Heart left ventricle (tissue), 16 donors: ENCODE measurements at regions of chr14 and their contacts with region 1.

Region 1: GRCh38 chr14:37142835-37143401 is 29.5 kb downstream of the SLC25A21 start:
- DNase-seq: no peak
- ATAC-seq: no peak
- H3K4me3 ChIP-seq: no peak overlapping the region
- H3K27ac ChIP-seq: no peak overlapping the region
- H3K4me1 ChIP-seq: no peaks in the 10 kb centered on the region
- H3K27me3 ChIP-seq: no peaks in the 10 kb centered on the region
- CTCF ChIP-seq: no peak
- POLR2A ChIP-seq: no peak

Region 2: GRCh38 chr14:36647824-36648753 is 494.8 kb before region 1 on chr14:
- intact Hi-C with region 1: loop called in 2 of 10 experiments (anchors 10 kb)
- DNase-seq: peak in 1 of 5 donors; percentile 25
- ATAC-seq: peak in 3 of 4 donors; percentile 68 to 87 (median 78)
- H3K4me3 ChIP-seq: peak overlapping the region in 11 of 12 donors; percentile 2 to 42 (median 32)
- H3K27ac ChIP-seq: no peak overlapping the region
- H3K4me1 ChIP-seq: peaks cover 0 to 19% (median 13%) of the 10 kb centered on the region in 12 donors
- H3K27me3 ChIP-seq: peaks cover 43 to 97% (median 80%) of the 10 kb centered on the region in 9 donors
- CTCF ChIP-seq: peak in 10 of 12 donors; percentile 10 to 53 (median 38)
- POLR2A ChIP-seq: no peak

Region 3: DNA sequence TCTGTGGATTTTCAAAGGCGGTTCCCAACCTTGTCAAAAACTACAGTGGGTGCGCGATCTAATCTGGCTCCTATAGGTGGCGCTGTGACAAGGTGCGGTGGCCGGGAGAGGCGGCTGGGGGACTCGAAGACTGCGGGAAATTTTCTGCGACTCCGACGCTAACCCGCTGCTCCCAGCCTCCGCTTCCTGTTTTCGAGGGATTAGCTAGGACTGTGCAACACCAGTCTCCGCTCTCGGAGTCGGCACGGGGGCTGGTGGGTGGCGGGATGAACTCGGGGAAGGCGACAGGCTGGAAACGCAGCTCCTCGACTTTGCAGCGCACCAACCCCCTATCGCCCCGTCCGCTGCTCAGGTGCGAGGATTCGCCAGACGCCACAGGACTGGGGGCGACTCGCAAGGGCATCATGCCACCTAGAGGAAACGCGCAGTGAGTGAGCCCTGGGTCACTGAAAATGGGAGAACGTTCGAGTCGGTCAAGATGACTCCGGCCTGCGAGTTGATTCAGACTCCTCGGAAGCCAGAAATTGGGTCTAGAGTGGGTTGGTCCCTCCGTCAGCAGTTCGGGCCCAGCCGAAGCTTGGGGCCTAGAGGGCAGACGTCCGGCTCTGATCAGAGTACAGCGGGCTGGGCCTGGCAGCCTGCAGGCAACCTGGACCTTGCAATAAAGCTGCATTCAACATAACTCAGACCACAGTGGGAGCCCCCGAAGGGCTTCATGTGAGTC is 486.8 kb before region 1 on chr14:
- intact Hi-C with region 1: loop called in 1 of 10 experiments (anchors 10 kb)
- DNase-seq: no peak
- ATAC-seq: peak in 1 of 4 donors; percentile 20
- H3K4me3 ChIP-seq: no peak overlapping the region
- H3K27ac ChIP-seq: no peak overlapping the region
- H3K4me1 ChIP-seq: peaks cover 0 to 42% (median 20%) of the 10 kb centered on the region in 12 donors
- H3K27me3 ChIP-seq: peaks cover 83 to 100% (median 100%) of the 10 kb centered on the region in 9 donors
- CTCF ChIP-seq: peak in 9 of 12 donors; percentile 26 to 47 (median 33)
- POLR2A ChIP-seq: no peak

Region 4: GRCh38 chr14:36941783-36942521 is 201.0 kb before region 1 on chr14:
- intact Hi-C with region 1: loop called in 1 of 10 experiments (anchors 10 kb)
- DNase-seq: peak; percentile 34 to 78 (median 46)
- ATAC-seq: peak in 3 of 4 donors; percentile 37 to 81 (median 73)
- H3K4me3 ChIP-seq: no peak overlapping the region
- H3K27ac ChIP-seq: no peak overlapping the region
- H3K4me1 ChIP-seq: no peaks in the 10 kb centered on the region
- H3K27me3 ChIP-seq: peaks cover 0 to 13% (median 0%) of the 10 kb centered on the region in 9 donors
- CTCF ChIP-seq: peak; percentile 87 to 97 (median 94)
- POLR2A ChIP-seq: no peak

Region 5: GRCh38 chr14:37116933-37117849 is 25.7 kb before region 1 on chr14:
- intact Hi-C with region 1: no loop called
- DNase-seq: no peak
- ATAC-seq: no peak
- H3K4me3 ChIP-seq: no peak overlapping the region
- H3K27ac ChIP-seq: no peak overlapping the region
- H3K4me1 ChIP-seq: no peaks in the 10 kb centered on the region
- H3K27me3 ChIP-seq: peaks cover 0 to 3% (median 0%) of the 10 kb centered on the region in 9 donors
- CTCF ChIP-seq: peak in 2 of 12 donors; percentile 6 to 10
- POLR2A ChIP-seq: no peak

Region 6: DNA sequence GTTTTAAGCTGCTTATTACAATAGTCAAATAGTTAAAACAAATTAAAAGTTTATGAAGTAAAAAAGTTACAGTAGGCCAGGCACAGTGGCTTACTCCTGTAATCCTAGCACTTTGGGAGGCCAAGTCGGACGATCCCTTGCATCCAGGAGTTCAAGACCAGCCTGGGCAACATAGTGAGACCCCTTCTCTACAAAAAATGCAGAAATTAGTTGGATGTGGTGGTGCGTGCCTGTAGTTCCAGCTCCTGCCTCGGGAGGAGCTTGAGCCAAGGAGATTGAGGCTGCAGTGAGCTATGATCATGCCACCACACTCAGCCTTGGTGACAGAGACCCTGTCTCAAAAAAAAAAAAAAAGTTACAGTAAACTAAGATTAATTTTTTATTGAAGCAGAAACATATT is 197.4 kb after region 1 on chr14:
- intact Hi-C with region 1: no loop called
- DNase-seq: no peak
- ATAC-seq: no peak
- H3K4me3 ChIP-seq: no peak overlapping the region
- H3K27ac ChIP-seq: no peak overlapping the region
- H3K4me1 ChIP-seq: no peaks in the 10 kb centered on the region
- H3K27me3 ChIP-seq: no peaks in the 10 kb centered on the region
- CTCF ChIP-seq: no peak
- POLR2A ChIP-seq: no peak

Region 7: DNA sequence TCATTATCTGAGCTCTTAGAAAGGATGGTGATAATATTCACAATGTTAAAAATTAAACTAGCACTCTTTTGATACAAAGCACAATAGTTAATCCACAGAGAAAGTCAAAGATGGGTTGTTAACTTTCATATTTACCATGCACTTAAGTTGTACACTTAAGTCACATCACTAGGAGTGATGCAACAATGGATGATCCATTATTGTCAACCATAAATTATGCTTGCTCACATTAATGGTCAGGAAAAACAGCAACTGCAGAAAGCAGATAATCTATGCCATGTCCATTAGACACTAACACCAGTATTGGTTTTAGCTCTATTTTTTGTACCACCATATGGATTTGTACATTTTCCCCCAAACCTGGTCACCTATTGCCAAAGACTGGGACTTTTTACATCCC is 256.6 kb after region 1 on chr14:
- intact Hi-C with region 1: no loop called
- DNase-seq: no peak
- ATAC-seq: no peak
- H3K4me3 ChIP-seq: no peak overlapping the region
- H3K27ac ChIP-seq: no peak overlapping the region
- H3K4me1 ChIP-seq: peaks cover 0 to 2% (median 0%) of the 10 kb centered on the region in 12 donors
- H3K27me3 ChIP-seq: no peaks in the 10 kb centered on the region
- CTCF ChIP-seq: no peak
- POLR2A ChIP-seq: no peak

Region 8: GRCh38 chr14:37776791-37777499 is 634.0 kb after region 1 on chr14:
- intact Hi-C with region 1: no loop called
- DNase-seq: no peak
- ATAC-seq: no peak
- H3K4me3 ChIP-seq: no peak overlapping the region
- H3K27ac ChIP-seq: no peak overlapping the region
- H3K4me1 ChIP-seq: no peaks in the 10 kb centered on the region
- H3K27me3 ChIP-seq: no peaks in the 10 kb centered on the region
- CTCF ChIP-seq: no peak
- POLR2A ChIP-seq: no peak